GM13977 (cell line): ENCODE measurements at regions of chr13 and their contacts with region 1.

Region 1: DNA sequence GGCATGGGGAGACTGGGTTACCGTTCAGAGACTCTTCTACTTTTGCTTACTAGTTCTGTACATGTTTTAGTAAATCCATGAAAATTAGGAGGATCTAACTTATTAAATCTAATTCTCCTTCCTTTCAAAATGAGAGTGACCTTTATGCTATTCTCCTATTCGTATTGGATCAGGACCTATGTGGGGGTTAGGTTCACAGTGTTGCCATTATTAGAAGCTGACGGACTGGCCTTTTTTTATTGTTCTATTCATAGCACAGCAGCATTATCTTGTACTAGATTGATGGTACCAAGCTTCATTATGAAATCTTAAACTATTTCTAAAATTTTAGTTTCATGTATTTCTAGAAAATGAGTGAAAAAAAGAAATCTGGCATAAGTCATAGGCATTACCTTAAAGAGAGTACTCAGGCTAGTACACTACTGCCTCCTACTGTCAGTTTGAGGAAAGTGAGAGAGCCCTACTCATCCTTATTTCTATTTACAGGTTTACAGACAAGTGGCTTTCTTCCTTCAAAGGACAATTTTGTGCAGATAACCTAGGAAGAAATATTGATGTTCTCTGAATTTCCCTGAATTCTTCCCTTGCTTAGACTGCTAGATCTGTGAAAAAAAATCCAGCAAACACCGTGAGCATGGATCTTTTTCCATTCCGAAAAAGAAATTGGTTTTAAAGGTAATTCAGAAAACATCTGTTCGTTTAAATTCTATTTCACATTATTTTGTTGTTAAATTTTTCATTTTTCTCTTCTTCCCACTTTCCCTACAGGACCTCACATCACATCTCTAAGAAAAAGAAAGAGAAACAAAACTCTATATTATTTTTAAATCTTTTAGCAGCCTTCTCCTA is 485.5 kb downstream of the DIAPH3 start:
- DNase-seq: peak; percentile 31
- CTCF ChIP-seq: peak; percentile 64

Region 2: GRCh38 chr13:59391696-59392095 is 286.5 kb before region 1 on chr13:
- in situ Hi-C with region 1: loop called (anchors 10 kb)
- DNase-seq: peak; percentile 61
- CTCF ChIP-seq: peak; percentile 81

Region 3: DNA sequence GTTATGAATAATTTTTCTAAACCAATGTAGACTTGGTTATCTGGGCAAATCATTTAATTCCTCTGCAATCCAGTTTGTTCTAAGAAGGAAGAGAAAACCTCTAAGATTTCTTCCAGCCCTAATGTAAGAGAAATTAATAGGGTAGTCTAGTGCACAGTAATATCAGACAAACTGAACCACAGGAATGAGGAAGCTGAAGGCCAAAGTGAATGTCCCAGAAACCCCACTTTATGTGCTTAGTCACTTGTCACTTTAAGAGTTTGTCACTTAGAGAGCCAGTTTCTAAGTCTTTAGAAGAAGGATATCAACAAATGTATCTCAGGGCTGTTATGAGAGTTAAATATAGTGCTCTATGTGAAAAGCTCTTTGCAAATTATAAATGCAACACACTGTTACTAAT is 265.1 kb before region 1 on chr13:
- in situ Hi-C with region 1: no loop called
- DNase-seq: no peak
- CTCF ChIP-seq: no peak

Region 4: GRCh38 chr13:59437902-59438301 is 240.3 kb before region 1 on chr13:
- in situ Hi-C with region 1: no loop called
- DNase-seq: no peak
- CTCF ChIP-seq: no peak

Region 5: DNA sequence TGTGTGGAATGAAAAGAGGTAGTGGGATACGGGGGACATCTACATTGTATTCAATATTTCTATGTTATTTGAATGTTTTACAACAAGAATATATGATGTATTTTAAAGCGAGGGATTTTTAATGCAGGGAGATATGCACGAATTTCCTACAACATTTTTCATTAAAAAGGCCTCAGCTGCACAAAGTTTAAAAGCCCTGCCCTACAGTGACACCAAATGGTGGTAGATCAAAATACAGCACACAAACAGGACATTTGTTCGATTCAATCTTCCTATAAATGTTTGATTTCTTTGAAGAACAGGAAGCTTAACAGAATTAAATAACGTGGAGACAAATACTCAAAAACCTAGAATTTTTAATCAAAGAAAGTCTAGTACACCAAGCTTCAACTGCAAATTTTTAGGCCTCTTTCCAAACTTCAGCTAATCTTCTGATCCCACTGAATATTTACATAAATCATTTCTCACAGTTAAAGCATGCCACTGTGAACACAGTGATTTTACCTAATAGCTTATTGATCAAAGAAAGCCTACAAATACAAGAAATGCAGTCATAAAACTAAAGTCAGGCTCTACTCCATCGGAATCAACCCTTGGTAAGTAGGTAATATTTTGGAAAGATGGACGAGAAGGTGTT is 228.3 kb after region 1 on chr13:
- in situ Hi-C with region 1: loop called (anchors 25 kb)
- DNase-seq: peak; percentile 9
- CTCF ChIP-seq: peak; percentile 62

Region 6: DNA sequence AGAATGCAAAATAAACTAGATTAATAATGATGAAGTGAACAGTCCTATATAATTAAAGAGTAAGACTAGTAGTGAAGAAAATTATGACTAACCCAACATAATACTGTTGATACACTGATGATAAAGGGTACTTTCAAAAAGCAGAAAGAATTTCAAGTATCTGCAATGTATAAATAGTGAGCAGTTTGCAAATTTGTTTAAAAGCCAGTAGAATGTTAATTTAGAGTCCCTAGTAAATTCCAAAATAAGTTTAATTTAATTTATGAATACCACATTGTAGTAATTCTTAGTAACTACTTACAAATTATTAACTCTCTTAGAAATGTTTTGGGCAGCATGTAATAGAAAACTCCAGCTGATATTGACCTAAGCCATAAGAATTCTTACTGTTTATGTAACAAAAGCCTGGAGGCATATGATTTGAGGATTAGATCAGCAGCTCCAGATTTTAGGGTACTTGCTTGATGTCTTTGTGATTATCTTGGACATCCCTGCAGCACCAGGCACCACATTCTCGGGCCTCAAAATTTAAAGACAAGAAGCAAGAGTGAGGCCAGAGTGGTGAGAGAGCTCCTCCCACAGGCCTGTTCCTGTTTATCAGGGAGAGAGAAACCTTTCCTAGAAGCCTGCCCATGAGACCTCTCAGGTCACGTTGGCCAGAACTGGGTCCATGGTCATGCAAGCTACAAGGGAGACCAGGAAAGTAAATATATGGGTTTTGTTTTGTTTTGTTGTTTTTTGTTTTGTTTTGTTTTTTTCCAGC is 651.2 kb after region 1 on chr13:
- in situ Hi-C with region 1: loop called (anchors 25 kb)
- DNase-seq: peak; percentile 35
- CTCF ChIP-seq: peak; percentile 63

Region 7: DNA sequence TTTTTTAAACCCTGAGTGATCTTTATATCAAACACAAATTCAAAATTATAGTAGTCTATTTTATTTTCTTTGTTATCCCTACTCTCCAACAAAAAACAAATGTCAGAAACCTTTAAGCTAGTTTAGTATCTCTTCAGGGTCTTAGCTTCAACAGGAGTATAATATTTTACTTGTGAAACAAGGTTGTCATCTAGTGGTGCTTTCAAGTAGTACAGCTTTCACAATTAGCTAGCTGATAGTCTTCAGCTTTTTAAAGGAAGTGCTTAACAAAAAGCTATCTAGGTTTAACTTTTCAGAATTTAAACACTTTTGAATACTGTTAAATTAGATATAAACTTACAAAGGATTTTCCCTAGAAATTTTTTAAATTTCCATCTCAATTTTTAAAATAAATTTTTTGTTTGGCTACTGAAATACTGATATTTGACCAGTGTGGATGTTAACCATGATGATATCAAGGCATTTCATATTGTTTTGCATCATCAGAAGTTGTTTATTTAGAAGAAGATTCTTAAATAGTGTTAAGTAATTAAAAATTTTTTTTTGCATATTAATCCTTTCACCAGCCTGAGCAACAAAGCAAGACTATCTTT is 753.0 kb after region 1 on chr13:
- in situ Hi-C with region 1: loop called (anchors 25 kb)
- DNase-seq: no peak
- CTCF ChIP-seq: peak; percentile 75